ENCODE measurements at regions of chr16 and their contacts with region 1.

Region 1: DNA sequence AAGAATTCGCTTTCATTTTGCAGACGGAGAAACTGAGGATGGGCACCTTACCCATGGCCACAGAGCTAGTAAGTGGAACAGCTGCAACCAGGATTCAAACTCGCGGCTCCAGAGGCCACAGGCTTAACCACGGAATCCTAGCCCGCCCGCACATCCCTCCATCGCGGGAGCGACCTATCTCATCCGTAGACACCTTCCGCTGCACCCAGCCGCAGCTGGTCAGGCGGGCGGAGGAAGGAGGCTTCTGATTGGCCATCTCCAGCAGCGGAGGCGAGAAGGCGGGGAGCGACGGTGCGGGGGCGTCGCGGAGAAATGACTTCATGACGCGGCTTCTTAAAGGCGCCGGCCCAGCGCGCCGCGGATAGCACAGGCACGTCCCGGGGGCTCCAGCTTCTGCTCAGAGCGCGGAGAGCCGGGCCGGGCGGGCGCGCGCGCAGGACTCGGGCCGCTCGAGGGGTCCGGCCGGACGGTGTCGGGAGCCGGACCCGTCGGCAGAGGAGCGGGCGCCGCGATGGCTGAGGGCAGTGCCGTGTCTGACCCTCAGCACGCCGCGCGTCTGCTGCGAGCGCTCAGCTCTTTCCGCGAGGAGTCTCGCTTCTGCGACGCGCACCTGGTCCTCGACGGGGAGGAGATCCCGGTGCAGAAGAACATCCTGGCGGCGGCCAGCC is at the start of gene GAN:
- DNase-seq: peak; percentile 95
- H3K4me3 Mint-ChIP-seq: peak within 1 kb of the TSS; percentile 90
- H3K27ac Mint-ChIP-seq: peak within 1 kb of the TSS; percentile 83
- H3K4me1 Mint-ChIP-seq: peaks cover 76% of the 10 kb centered on the region
- H3K27me3 Mint-ChIP-seq: no peaks in the 10 kb centered on the region
- total RNA-seq, gene GAN: 16.4 and 16.8 TPM in 2 replicates

Region 2: DNA sequence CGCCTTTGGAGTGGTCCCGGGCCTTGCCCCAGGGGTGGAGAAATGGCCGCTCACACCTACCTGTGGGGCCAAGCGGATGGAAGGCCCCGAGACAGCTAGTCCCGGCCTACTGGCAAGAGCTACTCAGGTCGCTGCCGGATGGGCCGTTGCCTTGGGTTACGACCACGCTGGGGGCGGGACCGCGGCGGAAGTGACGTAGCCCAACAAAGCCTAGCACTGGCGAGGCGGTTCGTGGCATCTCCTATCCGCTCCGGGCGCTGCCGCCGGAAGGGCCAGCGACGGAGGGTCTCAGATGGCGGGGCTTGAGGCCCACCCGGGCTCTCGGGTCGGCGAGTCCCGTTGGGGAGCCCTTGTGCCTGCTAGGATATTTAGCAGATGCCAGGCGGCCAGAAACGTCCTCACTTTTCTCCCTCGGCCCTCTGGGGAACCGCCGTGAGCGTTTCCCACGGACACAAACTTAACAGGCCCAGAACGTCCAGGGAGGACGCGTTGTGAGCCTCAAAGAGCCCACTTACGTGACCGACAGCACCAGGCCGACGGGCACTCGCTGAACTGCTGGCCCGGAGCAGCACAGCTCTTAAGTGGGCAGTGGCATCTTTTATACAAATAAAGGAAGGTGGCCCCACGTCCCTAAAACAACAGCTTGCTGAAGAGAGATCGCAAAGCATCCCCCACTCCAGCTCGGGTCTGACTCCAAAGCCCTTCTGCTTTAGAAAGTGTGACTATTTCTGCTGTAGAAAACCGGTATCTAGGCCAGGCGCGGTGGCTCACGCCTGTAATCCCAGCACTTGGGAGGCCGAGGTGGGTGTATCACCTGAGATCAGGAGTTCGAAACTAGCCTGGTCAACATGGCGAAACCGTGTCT is 237.4 kb before region 1 on chr16 and contains the start of gene C16orf46:
- intact Hi-C with region 1: loop called (anchors 1 kb)
- DNase-seq: peak; percentile 96
- H3K4me3 Mint-ChIP-seq: peak within 1 kb of the TSS; percentile 32
- H3K27ac Mint-ChIP-seq: peak within 1 kb of the TSS; percentile 24
- H3K4me1 Mint-ChIP-seq: no peaks in the 10 kb centered on the region
- H3K27me3 Mint-ChIP-seq: peaks cover 3% of the 10 kb centered on the region
- total RNA-seq, gene C16orf46: 0.32 and 0.41 TPM in 2 replicates

Region 3: GRCh38 chr16:81335669-81336068 is 20.9 kb after region 1 on chr16:
- intact Hi-C with region 1: loop called (anchors 1 kb)
- DNase-seq: no peak
- H3K4me3 Mint-ChIP-seq: no peak overlapping the region
- H3K27ac Mint-ChIP-seq: peak overlapping the region; percentile 53
- H3K4me1 Mint-ChIP-seq: peaks cover 13% of the 10 kb centered on the region
- H3K27me3 Mint-ChIP-seq: no peaks in the 10 kb centered on the region

Region 4: DNA sequence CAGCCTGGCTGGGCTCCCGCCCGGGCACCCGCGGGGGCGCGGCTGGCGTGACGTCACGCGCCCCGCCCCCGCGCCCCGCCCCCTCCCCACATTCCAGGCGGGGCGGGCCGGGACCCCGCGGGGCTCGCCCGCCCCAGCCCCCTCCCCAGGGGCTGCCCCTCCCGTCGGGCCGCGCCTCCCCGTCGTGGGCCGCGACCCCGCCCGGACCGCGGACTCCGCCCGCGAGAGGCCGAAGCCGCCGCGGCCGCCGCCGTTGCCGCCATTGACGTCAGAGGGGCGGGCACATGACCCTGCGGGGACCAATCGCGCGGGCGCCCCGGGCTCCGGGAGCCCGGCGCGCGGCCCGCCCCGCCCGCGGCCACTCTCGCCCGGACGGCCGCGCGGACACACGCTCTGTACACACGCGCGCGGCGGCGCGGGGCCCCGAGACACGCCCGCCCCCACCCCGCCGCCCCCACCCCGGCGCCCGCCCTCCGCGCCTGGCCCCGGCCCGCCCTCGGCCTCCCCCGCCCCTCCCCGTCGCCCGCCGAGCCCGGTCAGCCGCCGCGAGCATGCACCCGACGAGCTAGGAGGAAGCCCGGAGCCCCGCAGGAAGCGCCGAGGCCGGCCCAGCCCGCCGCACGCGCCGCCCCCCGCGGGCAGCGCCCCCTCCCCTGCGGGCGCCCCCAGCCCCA is 129.8 kb after region 1 on chr16 and contains the start of gene CMIP:
- intact Hi-C with region 1: loop called (anchors 5 kb)
- DNase-seq: peak; percentile 78
- H3K4me3 Mint-ChIP-seq: peak within 1 kb of the TSS; percentile 88
- H3K27ac Mint-ChIP-seq: peak within 1 kb of the TSS; percentile 93
- H3K4me1 Mint-ChIP-seq: peaks cover 48% of the 10 kb centered on the region
- H3K27me3 Mint-ChIP-seq: peaks cover 28% of the 10 kb centered on the region
- total RNA-seq, gene CMIP: 45.4 and 45.8 TPM in 2 replicates

Region 5: DNA sequence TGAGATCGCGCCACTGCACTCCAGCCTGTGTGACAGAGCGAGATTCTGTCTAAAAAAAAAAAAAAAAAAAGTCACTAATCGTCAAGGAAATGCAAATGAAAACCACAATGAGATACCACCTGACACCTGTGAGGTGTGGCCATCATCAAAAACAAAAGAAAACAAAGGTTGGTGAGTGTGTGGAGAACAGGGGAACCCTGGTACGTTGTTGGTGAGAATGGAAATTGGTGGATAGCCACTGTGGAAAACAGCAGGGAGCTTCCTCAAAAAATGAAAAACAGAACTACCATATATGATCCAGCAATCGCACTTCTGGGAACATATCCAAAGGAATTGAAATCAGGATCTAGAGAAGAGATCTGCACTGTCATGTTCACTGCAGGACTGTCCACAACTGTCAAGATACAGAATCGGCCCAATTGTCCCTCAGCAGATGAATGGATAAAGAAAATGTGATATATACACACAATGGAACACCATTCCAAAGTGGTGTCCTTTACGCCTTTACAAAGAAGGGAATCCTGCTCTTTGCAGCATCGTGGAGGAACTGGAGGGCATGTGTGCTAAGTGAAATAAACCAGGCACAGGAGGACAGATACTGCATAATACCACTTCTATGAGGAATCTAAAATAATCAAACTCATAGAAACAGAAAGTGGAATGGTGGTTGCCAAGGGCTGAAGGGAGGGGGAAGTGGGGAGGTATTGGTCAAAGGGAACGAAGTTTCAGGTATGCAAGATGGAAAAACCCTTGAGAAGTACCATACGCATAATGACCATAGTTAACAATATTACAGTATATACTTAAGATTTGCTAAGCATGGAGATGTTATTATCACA is 400.8 kb after region 1 on chr16:
- intact Hi-C with region 1: loop called (anchors 5 kb)
- DNase-seq: peak; percentile 19
- H3K4me3 Mint-ChIP-seq: peak overlapping the region; percentile 63
- H3K27ac Mint-ChIP-seq: peak overlapping the region; percentile 50
- H3K4me1 Mint-ChIP-seq: peaks cover 46% of the 10 kb centered on the region
- H3K27me3 Mint-ChIP-seq: no peaks in the 10 kb centered on the region

Region 6: DNA sequence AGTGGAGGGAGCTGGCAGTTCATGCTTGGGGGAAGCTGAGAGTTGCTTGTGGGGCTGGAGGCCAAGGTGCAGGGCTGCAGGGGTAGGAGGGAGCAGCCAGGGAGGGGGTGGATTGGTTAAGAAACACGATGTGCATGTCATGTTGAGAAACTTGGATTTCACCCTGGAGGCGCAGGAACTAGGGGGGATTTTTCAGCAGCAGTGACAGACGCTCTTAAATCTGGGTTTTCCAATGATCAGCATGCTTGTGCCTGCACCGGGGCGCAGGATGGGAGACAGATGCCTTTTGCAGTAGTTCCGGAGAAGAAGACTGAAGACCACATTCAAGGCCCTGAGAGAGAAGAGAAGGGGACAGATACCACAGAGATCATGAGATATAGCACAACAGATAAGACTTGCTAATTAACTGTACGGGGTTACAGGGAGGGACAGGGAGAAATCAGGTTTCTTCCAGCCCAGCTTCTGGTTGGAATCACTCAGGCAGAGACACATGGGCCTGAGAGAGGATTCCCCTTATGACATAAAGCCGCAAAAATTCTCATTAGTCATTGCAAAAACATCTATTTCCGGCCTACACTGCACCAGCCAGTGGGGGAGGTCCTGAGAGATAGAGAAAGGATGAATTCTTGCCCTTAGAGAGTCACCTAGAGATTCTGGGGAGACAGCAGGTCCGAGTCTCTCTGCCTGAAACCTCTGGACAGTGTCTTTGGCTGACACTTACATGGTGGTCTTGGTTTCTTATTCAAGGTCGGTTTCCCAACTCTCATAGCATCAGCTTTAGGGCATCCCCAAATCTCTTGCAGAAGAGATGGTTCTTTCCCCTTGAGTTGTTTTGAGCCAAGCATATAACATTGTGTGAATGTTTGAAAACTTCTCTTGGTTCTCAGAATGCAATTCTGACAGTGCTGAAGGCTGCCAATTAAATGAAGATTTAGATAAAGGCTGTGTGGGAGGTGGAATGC is 1339.1 kb after region 1 on chr16:
- intact Hi-C with region 1: loop called (anchors 10 kb)
- DNase-seq: peak; percentile 63
- H3K4me3 Mint-ChIP-seq: peak overlapping the region; percentile 78
- H3K27ac Mint-ChIP-seq: peak overlapping the region; percentile 99
- H3K4me1 Mint-ChIP-seq: peaks cover 95% of the 10 kb centered on the region
- H3K27me3 Mint-ChIP-seq: no peaks in the 10 kb centered on the region

Measured in activated T-helper 1 cell treated with anti-CD3 and anti-CD28 coated beads, Interleukin-12 subunit alpha, Interleukin-12 subunit beta, Interleukin-2, Interleukin-4 antibody, amounts not matched to agents 30 ng/mL and 10 ng/mL and 1 ng/mL, durations not matched to agents 14 hours and 24 hours and 36 hours (primary cell).